ENCODE measurements at regions of chr11 and their contacts with region 1.

Region 1: GRCh38 chr11:65497141-65498041 is 1.5 kb upstream of the MALAT1 start:
- H3K4me3 ChIP-seq: peak overlapping the region; percentile 98
- H3K27ac ChIP-seq: peak overlapping the region; percentile 98
- H3K4me1 ChIP-seq: peaks cover 7% of the 10 kb centered on the region
- CTCF ChIP-seq: no peak; the same call in 1 of the 2 replicates

Region 2: GRCh38 chr11:65366340-65366773 is 131.0 kb before region 1 on chr11:
- CTCF ChIA-PET with region 1: interaction called, 5 read pairs
- POLR2A ChIA-PET with region 1: interaction called, 21 read pairs
- H3K4me3 ChIP-seq: no peak overlapping the region
- H3K27ac ChIP-seq: no peak overlapping the region
- H3K4me1 ChIP-seq: no peaks in the 10 kb centered on the region
- CTCF ChIP-seq: peak; percentile 64

Region 3: GRCh38 chr11:65440831-65441499 is 56.4 kb before region 1 on chr11:
- CTCF ChIA-PET with region 1: interaction called, 3 read pairs
- POLR2A ChIA-PET with region 1: interaction called, 69 read pairs
- H3K4me3 ChIP-seq: no peak overlapping the region
- H3K27ac ChIP-seq: no peak overlapping the region
- H3K4me1 ChIP-seq: no peaks in the 10 kb centered on the region
- CTCF ChIP-seq: no peak

Region 4: DNA sequence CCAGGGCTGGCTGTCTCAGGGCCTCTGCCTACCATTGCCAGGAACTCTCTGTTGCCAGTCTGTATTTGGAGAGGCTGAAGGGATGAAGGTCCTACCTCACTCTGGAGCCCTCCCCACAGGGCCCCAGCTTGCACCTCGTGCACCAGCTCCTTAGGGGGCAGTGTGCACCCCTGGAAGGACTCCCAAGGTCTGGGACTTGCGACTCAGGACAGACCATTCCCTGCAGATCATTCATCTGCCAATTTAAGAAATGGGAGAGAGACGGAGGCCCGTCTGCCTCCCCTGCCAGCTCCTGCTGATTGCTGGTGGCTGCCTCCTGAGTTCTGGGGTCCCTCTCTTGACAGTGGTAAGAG is 26.0 kb before region 1 on chr11:
- CTCF ChIA-PET with region 1: interaction called, 35 read pairs
- POLR2A ChIA-PET with region 1: interaction called, 560 read pairs
- H3K4me3 ChIP-seq: no peak overlapping the region
- H3K27ac ChIP-seq: peak overlapping the region; percentile 62
- H3K4me1 ChIP-seq: peaks cover 5% of the 10 kb centered on the region
- CTCF ChIP-seq: peak; percentile 42; the same call in 1 of the 2 replicates

Region 5: DNA sequence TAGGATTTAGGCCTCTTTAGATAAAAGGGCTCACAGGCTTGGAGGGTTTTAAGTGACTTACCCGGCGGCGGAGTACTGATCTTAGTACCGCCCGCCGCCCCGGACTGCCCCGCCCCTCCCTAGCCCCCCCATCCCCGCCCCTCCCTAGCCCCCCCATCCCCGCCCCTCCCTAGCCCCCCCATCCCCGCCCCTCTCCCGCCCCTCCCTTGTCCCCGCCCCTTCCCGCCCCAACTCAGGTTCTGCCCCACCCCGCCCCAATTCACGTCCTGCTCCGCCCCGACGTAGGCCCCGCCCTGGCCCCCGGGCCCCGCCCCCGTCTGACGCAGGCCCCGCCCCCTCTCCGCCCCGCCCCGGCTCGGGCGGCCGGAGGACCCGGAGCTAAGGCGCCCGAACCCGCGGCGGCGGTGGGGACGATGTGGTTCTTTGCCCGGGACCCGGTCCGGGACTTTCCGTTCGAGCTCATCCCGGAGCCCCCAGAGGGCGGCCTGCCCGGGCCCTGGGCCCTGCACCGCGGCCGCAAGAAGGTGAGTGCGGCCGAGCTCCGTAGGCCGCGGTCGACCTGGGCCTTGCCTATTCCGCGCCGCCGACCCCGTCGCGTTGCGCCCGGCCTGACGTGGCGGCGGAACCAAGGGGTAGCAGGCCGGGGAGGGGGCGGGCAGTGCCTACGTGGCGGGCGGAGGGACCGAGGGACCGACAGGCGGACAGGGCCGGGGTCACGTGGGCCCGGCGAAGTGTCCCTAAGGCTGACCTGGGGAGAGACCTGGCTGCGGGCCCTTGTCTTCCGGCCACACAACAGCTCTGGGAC is 27.6 kb after region 1 on chr11 and contains the start of gene SCYL1:
- CTCF ChIA-PET with region 1: no interaction called
- POLR2A ChIA-PET with region 1: interaction called, 11 read pairs
- H3K4me3 ChIP-seq: peak within 1 kb of the TSS; percentile 82
- H3K27ac ChIP-seq: peak within 1 kb of the TSS; percentile 81
- H3K4me1 ChIP-seq: peaks cover 4% of the 10 kb centered on the region; the same call in 1 of the 2 replicates
- CTCF ChIP-seq: no peak

Measured in HEK293 (cell line).